ENCODE measurements at regions of chr7 and their contacts with region 1.

Region 1: GRCh38 chr7:130242198-130243014 is 24.3 kb upstream of the CPA2 start:
- DNase-seq: peak; percentile 6
- H3K4me3 Mint-ChIP-seq: no peak overlapping the region
- H3K27ac Mint-ChIP-seq: no peak overlapping the region
- H3K4me1 Mint-ChIP-seq: peaks cover 11% of the 10 kb centered on the region
- H3K27me3 Mint-ChIP-seq: peaks cover 8% of the 10 kb centered on the region

Region 2: GRCh38 chr7:130205084-130205947 is 37.1 kb before region 1 on chr7 and contains the start of gene TMEM209:
- intact Hi-C with region 1: loop called (anchors 1 kb)
- DNase-seq: peak; percentile 93
- H3K4me3 Mint-ChIP-seq: peak within 1 kb of the TSS; percentile 95
- H3K27ac Mint-ChIP-seq: peak within 1 kb of the TSS; percentile 97
- H3K4me1 Mint-ChIP-seq: peaks cover 32% of the 10 kb centered on the region
- H3K27me3 Mint-ChIP-seq: no peaks in the 10 kb centered on the region
- total RNA-seq, gene TMEM209: 47.4 and 55.0 TPM in 2 replicates

Region 3: GRCh38 chr7:130277763-130278643 is 35.6 kb after region 1 on chr7:
- intact Hi-C with region 1: loop called (anchors 5 kb)
- DNase-seq: no peak
- H3K4me3 Mint-ChIP-seq: no peak overlapping the region
- H3K27ac Mint-ChIP-seq: peak overlapping the region; percentile 73
- H3K4me1 Mint-ChIP-seq: peaks cover 24% of the 10 kb centered on the region
- H3K27me3 Mint-ChIP-seq: peaks cover 2% of the 10 kb centered on the region

Region 4: GRCh38 chr7:130486114-130486958 is 243.9 kb after region 1 on chr7:
- intact Hi-C with region 1: loop called (anchors 2 kb)
- DNase-seq: no peak
- H3K4me3 Mint-ChIP-seq: peak overlapping the region; percentile 78
- H3K27ac Mint-ChIP-seq: no peak overlapping the region
- H3K4me1 Mint-ChIP-seq: peaks cover 21% of the 10 kb centered on the region
- H3K27me3 Mint-ChIP-seq: peaks cover 41% of the 10 kb centered on the region

Region 5: GRCh38 chr7:130560970-130561369 is 318.6 kb after region 1 on chr7:
- intact Hi-C with region 1: loop called (anchors 1 kb)
- DNase-seq: no peak
- H3K4me3 Mint-ChIP-seq: no peak overlapping the region
- H3K27ac Mint-ChIP-seq: no peak overlapping the region
- H3K4me1 Mint-ChIP-seq: no peaks in the 10 kb centered on the region
- H3K27me3 Mint-ChIP-seq: no peaks in the 10 kb centered on the region

Region 6: GRCh38 chr7:130758429-130759056 is 516.1 kb after region 1 on chr7:
- intact Hi-C with region 1: loop called (anchors 1 kb)
- DNase-seq: no peak
- H3K4me3 Mint-ChIP-seq: no peak overlapping the region
- H3K27ac Mint-ChIP-seq: no peak overlapping the region
- H3K4me1 Mint-ChIP-seq: no peaks in the 10 kb centered on the region
- H3K27me3 Mint-ChIP-seq: peaks cover 13% of the 10 kb centered on the region

Region 7: DNA sequence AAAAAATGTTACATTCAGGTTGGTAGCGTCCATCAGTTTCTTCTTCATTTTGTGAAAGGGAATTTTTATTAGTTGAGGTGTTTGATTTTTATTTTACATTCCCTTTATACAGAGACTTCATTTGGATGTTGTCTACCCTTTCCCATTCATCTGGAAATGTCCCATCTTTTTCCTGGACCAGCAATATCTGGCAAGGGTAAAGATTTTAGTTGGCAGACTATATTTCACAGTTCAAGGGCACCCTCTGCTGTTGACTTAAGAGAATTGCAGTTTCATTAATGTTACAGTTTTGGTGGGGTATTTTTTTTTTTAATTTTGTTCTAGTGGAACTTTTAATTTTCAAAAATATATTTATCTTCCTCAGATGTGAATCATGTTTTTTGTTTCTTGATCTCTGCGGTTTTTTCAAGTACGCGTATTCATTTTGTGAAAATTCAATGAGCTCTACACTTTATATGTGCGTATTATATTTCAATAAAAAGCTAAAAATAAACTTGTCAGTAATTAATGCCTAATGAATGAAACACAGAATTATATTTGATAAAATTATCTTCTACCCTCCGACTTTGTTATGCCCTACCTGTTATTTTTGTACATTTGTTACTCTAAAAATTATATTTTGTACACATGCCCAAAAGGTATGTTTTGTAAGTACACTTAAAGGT is 589.5 kb after region 1 on chr7:
- intact Hi-C with region 1: loop called (anchors 1 kb)
- DNase-seq: no peak
- H3K4me3 Mint-ChIP-seq: no peak overlapping the region
- H3K27ac Mint-ChIP-seq: no peak overlapping the region
- H3K4me1 Mint-ChIP-seq: no peaks in the 10 kb centered on the region
- H3K27me3 Mint-ChIP-seq: peaks cover 11% of the 10 kb centered on the region